BJ (cell line): ENCODE measurements at regions of chr10 and their contacts with region 1.

Region 1: GRCh38 chr10:71771821-71772617 is 1.3 kb downstream of the VSIR start:
- DNase-seq: peak; percentile 39
- H3K4me3 ChIP-seq: peak overlapping the region; percentile 85
- H3K27me3 ChIP-seq: no peaks in the 10 kb centered on the region
- CTCF ChIP-seq: no peak

Region 2: DNA sequence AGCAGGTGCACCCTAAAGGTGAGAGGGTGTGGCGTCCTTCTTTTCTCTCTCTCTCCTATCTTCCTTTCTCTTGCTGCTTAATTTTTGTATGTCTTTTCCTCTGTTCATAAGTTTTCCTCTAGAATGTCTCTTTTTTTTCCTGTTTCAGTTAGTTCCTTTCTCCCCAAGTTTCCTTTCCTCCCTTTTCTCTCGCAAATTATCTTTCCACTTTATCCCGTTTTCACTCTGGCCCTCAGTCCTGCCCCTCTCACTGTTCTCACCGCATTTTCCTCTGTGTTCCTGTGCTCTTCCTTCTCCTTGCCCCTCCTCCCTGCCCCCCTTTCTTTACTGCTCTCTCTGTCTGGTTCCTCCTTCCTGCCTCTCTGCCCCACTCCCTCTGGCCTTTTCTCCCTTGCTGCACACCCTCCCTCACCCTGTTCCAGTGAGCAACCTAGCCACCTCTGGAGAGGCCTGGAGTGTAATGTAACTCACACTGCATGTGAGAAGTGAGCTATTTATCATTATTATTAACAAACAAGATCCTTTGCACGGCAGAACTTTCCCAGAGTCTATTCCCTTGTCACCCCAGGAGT is 210.9 kb before region 1 on chr10:
- CTCF ChIA-PET with region 1: no interaction called
- POLR2A ChIA-PET with region 1: no interaction called
- DNase-seq: no peak
- H3K4me3 ChIP-seq: no peak overlapping the region
- H3K27me3 ChIP-seq: peaks cover 11% of the 10 kb centered on the region
- CTCF ChIP-seq: no peak

Region 3: DNA sequence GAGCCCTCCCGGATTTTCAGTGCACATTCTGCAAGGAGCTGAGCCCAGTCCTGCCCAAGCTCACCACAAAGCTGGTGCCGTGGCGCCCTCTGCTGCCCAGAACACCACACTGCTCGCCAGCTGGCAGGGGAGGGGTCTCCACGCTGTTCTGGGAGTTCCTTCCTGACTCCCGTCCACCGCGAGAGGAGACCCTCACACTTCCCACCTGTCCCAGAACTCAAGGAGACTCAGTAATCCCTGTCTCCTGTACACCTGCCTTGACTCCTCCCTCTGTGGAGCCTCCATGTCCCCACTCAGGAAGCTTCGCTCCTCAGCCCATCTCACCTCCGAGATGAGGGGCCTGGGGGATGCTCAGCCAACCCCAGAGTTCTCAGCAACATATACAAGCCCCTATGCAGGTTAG is 63.7 kb before region 1 on chr10:
- CTCF ChIA-PET with region 1: interaction called, 41 read pairs
- POLR2A ChIA-PET with region 1: no interaction called
- DNase-seq: no peak
- H3K4me3 ChIP-seq: no peak overlapping the region
- H3K27me3 ChIP-seq: peaks cover 2% of the 10 kb centered on the region; the same call in 1 of the 2 replicates
- CTCF ChIP-seq: peak; percentile 82

Region 4: GRCh38 chr10:71713135-71714030 is 58.6 kb before region 1 on chr10:
- CTCF ChIA-PET with region 1: interaction called, 41 read pairs
- POLR2A ChIA-PET with region 1: no interaction called
- DNase-seq: peak; percentile 73
- H3K4me3 ChIP-seq: no peak overlapping the region
- H3K27me3 ChIP-seq: no peaks in the 10 kb centered on the region
- CTCF ChIP-seq: peak; percentile 64

Region 5: DNA sequence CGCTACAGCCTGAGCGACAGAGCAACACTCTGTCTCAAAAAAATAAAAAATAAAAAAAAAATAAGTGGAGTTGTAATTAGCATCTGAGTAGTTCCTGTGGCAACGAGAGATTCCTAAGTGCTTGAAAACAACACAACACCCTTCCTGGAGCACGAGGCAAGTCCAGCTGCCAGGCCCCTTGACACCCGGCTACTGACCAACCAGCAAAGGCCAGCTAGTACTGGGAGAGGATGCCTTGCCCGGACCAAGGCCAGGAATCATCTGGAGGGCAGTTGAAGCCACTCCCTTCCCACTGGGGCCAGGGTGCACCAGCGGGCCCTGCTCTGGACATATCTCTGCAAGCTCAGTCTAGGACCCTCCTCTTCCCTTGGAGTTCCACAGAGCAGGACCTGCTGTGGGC is 53.0 kb before region 1 on chr10:
- CTCF ChIA-PET with region 1: interaction called, 21 read pairs
- POLR2A ChIA-PET with region 1: no interaction called
- DNase-seq: no peak
- H3K4me3 ChIP-seq: no peak overlapping the region
- H3K27me3 ChIP-seq: no peaks in the 10 kb centered on the region
- CTCF ChIP-seq: no peak

Region 6: GRCh38 chr10:71740069-71740468 is 31.9 kb before region 1 on chr10:
- CTCF ChIA-PET with region 1: interaction called, 12 read pairs
- POLR2A ChIA-PET with region 1: no interaction called
- DNase-seq: no peak
- H3K4me3 ChIP-seq: no peak overlapping the region
- H3K27me3 ChIP-seq: no peaks in the 10 kb centered on the region
- CTCF ChIP-seq: 0 out of 2 replicates have a peak, but pooled peaks have one; percentile 18

Region 7: DNA sequence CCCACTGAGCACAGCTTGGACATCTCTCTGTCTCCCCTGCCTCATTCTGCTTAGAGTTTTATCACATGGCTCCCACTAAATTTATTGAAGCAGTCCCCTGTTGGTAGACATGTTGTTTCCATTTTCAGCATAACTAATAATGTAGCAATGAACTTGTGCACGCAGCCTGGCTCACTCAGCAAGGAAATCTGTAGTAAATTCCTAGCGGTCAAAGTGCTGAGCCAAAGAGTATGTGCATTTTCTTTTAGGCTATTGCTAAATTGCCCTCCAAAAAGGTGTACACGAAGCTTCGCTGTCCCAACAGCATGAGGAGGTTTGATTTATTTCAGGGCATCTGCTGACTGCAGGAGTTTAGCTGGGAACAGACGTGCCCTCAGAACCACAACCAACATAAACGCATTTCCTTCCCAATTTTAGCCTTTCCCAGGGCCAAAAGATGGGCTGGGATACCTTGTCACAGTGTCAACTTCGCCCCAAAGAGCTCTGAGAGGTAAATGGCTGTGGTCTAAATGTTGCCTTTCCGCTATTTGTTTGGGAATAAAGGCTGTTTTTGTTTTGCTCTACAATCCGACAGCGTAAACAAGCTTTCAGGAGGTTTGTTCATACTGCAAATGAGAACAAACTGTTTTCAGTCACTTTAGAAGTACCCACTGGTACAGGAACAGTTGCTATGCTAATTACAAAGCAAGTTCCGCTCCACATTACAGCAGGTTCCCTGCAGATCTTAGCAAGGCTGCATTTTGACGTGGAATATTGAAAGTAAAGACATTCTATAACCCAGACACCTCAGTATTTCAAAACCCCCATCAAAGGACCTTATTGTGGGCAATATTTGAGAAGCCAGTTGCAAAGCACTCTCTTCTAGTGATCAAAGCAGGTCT is 15.5 kb before region 1 on chr10:
- CTCF ChIA-PET with region 1: interaction called, 31 read pairs
- POLR2A ChIA-PET with region 1: interaction called, 7 read pairs
- DNase-seq: peak; percentile 74
- H3K4me3 ChIP-seq: no peak overlapping the region
- H3K27me3 ChIP-seq: no peaks in the 10 kb centered on the region
- CTCF ChIP-seq: no peak

Region 8: GRCh38 chr10:71782917-71783490 is 11.0 kb after region 1 on chr10:
- CTCF ChIA-PET with region 1: interaction called, 11 read pairs
- POLR2A ChIA-PET with region 1: interaction called, 4 read pairs
- DNase-seq: no peak
- H3K4me3 ChIP-seq: no peak overlapping the region
- H3K27me3 ChIP-seq: peaks cover 7% of the 10 kb centered on the region; the same call in 1 of the 2 replicates
- CTCF ChIP-seq: no peak

Region 9: DNA sequence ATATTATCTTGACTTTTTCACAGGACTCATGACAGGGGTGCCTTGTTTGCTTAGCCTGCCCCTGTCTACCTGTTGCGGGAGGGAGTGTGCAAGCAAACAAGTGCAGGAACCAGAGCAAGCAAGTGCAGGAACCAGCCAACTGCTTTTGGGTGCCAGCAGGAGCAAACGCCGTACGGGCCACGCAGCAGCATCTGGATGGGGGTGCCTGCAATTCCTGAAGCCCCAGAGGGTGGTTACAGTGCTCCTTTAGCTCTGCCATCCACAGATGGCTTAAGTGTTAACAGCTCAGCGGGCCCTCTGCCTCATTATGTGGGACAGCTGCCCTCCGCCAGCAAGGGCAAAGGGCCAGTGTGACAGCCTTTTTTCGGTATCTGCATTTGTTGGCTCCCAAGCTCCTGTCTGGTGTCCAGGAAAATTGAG is 770.4 kb after region 1 on chr10:
- CTCF ChIA-PET with region 1: no interaction called
- POLR2A ChIA-PET with region 1: no interaction called
- DNase-seq: no peak
- H3K4me3 ChIP-seq: no peak overlapping the region
- H3K27me3 ChIP-seq: no peaks in the 10 kb centered on the region
- CTCF ChIP-seq: no peak